ENCODE measurements at regions of chr10 and their contacts with region 1.

Region 1: DNA sequence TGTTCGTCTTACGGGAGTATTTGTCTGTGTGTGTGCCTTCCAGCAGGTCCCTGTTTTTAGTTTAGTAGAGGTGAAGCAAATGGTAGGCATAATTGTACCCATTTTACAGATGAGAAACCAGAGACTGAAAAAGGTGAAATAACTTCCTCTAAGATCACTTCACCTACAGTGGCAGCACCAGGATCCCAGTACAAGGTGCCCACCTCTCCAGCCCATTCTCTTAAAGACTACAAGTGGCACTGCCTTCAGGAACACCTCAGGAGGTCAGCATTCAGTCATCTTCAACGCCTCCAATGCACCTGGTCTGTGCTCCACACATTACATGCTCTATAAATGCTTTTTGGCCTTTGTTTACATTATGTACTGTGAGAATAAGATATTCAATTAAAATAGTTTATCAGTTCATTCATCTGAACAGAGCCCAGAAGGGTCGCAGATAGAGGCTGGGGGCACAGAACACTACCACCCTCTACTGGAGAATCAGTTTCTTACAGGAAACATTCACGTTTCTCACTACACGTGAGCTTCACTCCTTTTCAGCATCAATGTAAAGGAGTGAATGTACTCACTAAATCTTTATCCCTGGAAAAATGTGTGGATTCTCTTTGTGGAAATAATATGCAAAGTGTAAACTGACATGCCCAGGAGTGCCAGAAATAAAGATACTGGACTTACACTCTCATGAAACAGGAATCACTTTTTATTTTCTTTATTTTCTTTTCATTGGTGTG is 45.5 kb upstream of the ABLIM1 start:
- DNase-seq: no peak
- H3K4me3 ChIP-seq: no peak overlapping the region
- H3K27ac ChIP-seq: no peak overlapping the region
- H3K27me3 ChIP-seq: no peaks in the 10 kb centered on the region
- CTCF ChIP-seq: peak; percentile 81

Region 2: GRCh38 chr10:114550756-114551635 is 152.5 kb before region 1 on chr10:
- CTCF ChIA-PET with region 1: interaction called, 73 read pairs
- POLR2A ChIA-PET with region 1: interaction called, 4 read pairs
- DNase-seq: no peak
- H3K4me3 ChIP-seq: peak overlapping the region; percentile 43
- H3K27ac ChIP-seq: no peak overlapping the region
- H3K27me3 ChIP-seq: peaks cover 5% of the 10 kb centered on the region
- CTCF ChIP-seq: peak; percentile 39

Region 3: DNA sequence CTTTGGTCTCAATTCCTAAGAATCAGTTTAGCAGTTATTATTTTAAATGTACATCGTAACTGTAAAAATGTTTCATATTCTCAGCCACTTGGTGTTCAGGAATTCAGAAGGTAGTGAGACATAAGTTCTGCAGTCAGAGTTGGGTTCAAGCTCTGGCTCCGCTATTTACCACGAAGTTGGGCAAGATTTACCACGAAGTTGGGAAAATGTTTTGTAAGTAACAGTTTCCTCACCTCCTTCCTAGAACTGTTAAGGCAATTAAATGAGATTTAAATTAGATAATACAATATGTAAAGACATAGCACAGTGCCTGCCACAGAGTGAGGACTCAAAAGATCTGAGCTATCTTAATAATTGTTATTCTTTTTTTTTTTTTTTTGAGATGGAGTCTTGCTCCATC is 29.2 kb before region 1 on chr10:
- CTCF ChIA-PET with region 1: no interaction called
- POLR2A ChIA-PET with region 1: no interaction called
- DNase-seq: no peak
- H3K4me3 ChIP-seq: no peak overlapping the region
- H3K27ac ChIP-seq: no peak overlapping the region
- H3K27me3 ChIP-seq: peaks cover 6% of the 10 kb centered on the region
- CTCF ChIP-seq: no peak

Region 4: DNA sequence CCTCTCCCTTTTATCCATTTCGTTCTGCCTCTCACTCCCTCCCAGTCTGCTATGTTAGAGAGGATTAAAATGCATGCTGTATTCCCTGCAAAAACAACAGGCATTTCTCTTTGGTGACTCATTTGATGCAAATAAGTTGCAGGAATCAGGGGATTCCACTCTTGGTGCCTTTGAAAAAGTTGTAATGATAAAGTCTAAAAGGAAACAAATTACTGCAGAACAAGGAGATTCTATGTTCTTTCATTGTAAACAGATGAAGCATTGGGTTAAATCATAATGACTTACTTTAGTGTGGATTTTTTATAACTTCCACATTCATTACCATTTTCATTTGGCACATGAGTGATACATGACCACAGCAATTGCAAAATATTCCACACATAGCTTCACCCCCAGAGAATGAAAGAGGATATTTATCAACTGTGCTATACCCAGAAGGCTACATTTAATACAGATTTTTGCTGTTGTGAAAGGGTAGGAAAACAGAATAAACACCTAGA is 12.1 kb before region 1 on chr10:
- CTCF ChIA-PET with region 1: interaction called, 13 read pairs
- POLR2A ChIA-PET with region 1: no interaction called
- DNase-seq: no peak
- H3K4me3 ChIP-seq: no peak overlapping the region
- H3K27ac ChIP-seq: no peak overlapping the region
- H3K27me3 ChIP-seq: no peaks in the 10 kb centered on the region
- CTCF ChIP-seq: no peak

Region 5: GRCh38 chr10:114714281-114714741 is 10.8 kb after region 1 on chr10:
- CTCF ChIA-PET with region 1: interaction called, 20 read pairs
- POLR2A ChIA-PET with region 1: no interaction called
- DNase-seq: peak; percentile 95
- H3K4me3 ChIP-seq: no peak overlapping the region
- H3K27ac ChIP-seq: peak overlapping the region; percentile 77
- H3K27me3 ChIP-seq: no peaks in the 10 kb centered on the region
- CTCF ChIP-seq: no peak

Region 6: GRCh38 chr10:114779803-114780609 is 76.5 kb after region 1 on chr10:
- CTCF ChIA-PET with region 1: interaction called, 10 read pairs
- POLR2A ChIA-PET with region 1: no interaction called
- DNase-seq: peak; percentile 59
- H3K4me3 ChIP-seq: no peak overlapping the region
- H3K27ac ChIP-seq: peak overlapping the region; percentile 62
- H3K27me3 ChIP-seq: no peaks in the 10 kb centered on the region
- CTCF ChIP-seq: no peak

Measured in AG04450 (cell line).